HepG2 (cell line): ENCODE measurements at regions of chr9 and their contacts with region 1.

Region 1: DNA sequence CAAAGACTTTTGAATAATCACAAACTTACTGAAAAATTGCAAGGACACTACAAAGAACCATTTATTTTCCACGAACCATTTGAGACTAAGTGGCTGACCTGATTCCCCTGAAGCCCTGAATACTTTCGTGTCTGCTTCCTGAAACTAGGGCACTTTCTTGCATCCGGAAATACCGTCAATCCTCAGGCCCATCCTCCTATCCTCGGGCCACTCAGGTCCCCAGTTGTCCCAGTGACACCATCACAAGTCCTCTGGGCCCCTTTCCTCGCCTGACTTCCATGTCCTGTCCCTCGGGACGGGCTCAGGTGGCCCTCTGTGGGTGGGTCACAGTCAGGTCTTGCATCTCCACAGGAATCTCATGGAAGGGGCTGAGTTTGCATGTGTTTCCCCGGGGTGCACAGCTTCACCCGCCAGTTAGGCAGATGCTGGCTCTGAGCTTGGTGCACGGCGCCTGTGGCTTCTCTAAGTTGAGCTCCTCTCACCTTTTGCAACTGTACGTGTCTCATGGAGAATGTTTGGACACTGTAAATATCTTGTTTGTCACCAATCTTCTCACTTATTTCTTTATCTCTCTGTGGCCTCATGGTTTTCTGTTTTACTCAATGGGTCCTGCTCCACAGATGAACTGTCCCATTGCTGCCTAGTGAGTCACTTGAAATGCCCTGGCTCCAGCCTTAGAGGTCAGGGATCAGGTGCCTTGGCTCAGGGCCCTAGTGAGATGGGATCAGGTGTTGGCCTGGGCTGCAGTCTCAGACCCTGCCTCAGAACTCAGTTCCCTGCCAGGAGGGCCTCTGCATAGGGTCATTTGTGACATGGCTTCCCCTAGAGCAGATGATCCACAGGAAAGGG is 61.4 kb downstream of the WNK2 start:
- DNase-seq: peak; percentile 15
- ATAC-seq: no peak
- H3K4me3 ChIP-seq: no peak overlapping the region
- H3K27ac ChIP-seq: no peak overlapping the region
- H3K4me1 ChIP-seq: peaks cover 35% of the 10 kb centered on the region
- H3K27me3 ChIP-seq: no peaks in the 10 kb centered on the region
- CTCF ChIP-seq: no peak
- EP300 ChIP-seq: no peak
- POLR2A ChIP-seq: no peak
- RAD21 ChIP-seq: no peak

Region 2: GRCh38 chr9:93159601-93160471 is 85.5 kb before region 1 on chr9:
- CTCF ChIA-PET with region 1: no interaction called
- POLR2A ChIA-PET with region 1: no interaction called
- in situ Hi-C with region 1: no loop called
- intact Hi-C with region 1: loop called (anchors 2 kb)
- DNase-seq: peak; percentile 76
- ATAC-seq: peak; percentile 96
- H3K4me3 ChIP-seq: peak overlapping the region in 1 of 3 experiments; percentile 44; a peak in 1 of 6 replicates
- H3K27ac ChIP-seq: no peak overlapping the region
- H3K4me1 ChIP-seq: peaks cover 39% of the 10 kb centered on the region
- H3K27me3 ChIP-seq: peaks cover 0 to 11% of the 10 kb centered on the region in 2 experiments; a peak in 2 of 5 replicates
- CTCF ChIP-seq: peak; percentile 99
- EP300 ChIP-seq: no peak
- POLR2A ChIP-seq: no peak
- RAD21 ChIP-seq: peak; percentile 97

Region 3: DNA sequence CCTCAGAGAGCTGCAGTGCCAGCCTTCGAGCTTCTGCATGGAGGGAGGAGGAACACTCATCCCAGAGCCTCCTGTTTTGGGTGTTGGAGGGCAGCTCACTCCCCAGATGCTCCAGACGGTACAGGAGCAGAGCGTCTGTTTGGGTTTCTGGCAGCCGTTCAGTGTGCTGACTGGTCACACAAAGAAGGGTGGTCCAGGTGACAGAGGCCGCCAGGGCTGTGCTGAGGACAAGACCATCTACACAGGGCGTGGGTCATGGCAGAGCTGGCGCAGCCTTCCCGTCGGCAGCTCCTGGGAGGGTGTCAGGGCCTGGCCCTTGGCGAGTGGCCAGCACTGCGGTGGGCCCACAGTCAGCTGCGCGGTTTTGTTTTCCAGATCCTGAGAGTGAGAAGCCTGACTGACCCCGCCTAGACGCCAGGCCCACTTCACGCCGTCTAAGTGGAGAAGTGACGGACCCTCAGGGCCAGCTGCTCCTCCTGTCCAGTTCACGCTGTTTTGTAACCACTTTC is 74.7 kb after region 1 on chr9:
- CTCF ChIA-PET with region 1: no interaction called
- POLR2A ChIA-PET with region 1: no interaction called
- in situ Hi-C with region 1: no loop called
- intact Hi-C with region 1: no loop called
- DNase-seq: no peak
- ATAC-seq: no peak
- H3K4me3 ChIP-seq: no peak overlapping the region
- H3K27ac ChIP-seq: no peak overlapping the region
- H3K4me1 ChIP-seq: peaks cover 32% of the 10 kb centered on the region
- H3K27me3 ChIP-seq: no peaks in the 10 kb centered on the region; a peak in 1 of 5 replicates
- CTCF ChIP-seq: no peak
- EP300 ChIP-seq: no peak
- POLR2A ChIP-seq: no peak
- RAD21 ChIP-seq: no peak